Activated CD8-positive, alpha-beta T cell treated with anti-CD3 and anti-CD28 coated beads for 36 hours (primary cell): ENCODE measurements at regions of chr4 and their contacts with region 1.

Region 1: DNA sequence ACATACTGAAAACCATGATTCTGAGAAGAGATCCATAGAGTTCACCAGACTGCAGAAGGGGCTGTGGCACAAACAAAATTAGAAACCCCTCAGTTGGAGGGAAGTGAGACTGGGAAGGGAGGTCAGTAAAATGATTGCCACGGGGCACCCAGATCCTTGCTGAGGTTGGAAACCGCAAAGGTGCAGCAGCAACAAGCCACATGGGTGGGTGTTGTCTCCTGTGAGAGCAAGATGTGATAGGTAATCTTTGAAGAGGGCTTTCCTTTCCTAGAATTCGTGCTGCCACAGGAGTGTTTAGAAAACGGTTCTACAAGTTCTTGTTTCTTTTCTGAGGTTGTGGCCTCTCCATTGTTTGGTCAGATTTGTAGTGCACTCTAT is 85.5 kb downstream of the NFKB1 start:
- DNase-seq: peak; percentile 83
- ATAC-seq: peak; percentile 62
- H3K4me3 Mint-ChIP-seq: no peak overlapping the region
- H3K27ac Mint-ChIP-seq: peak overlapping the region; percentile 95
- H3K4me1 Mint-ChIP-seq: peaks cover 87% of the 10 kb centered on the region
- H3K27me3 Mint-ChIP-seq: no peaks in the 10 kb centered on the region
- CTCF ChIP-seq: no peak

Region 2: DNA sequence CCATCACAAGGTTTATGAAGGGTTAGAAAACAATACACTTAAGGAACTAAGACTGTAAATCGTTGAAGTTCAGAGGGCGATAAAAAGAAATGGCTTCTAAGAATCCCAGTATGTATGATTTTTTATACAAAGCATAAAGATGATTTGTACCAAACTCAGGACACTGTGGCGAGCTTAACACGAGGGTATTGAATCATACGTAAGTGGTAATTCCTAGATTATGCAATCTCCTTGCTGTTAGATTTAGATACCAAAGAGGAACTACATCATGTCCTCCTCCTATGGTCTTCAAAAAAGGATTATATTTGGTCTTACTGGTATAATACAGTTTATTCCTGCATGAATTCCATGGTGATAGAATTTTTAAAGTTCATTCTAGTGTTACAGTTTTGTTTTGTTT is 61.5 kb before region 1 on chr4:
- CTCF ChIA-PET with region 1: interaction called, 7 read pairs
- POLR2A ChIA-PET with region 1: interaction called, 4 read pairs
- intact Hi-C with region 1: loop called (anchors 5 kb)
- DNase-seq: no peak
- ATAC-seq: no peak
- H3K4me3 Mint-ChIP-seq: peak overlapping the region; percentile 17
- H3K27ac Mint-ChIP-seq: peak overlapping the region; percentile 84
- H3K4me1 Mint-ChIP-seq: peaks cover 91% of the 10 kb centered on the region
- H3K27me3 Mint-ChIP-seq: no peaks in the 10 kb centered on the region
- CTCF ChIP-seq: no peak

Region 3: DNA sequence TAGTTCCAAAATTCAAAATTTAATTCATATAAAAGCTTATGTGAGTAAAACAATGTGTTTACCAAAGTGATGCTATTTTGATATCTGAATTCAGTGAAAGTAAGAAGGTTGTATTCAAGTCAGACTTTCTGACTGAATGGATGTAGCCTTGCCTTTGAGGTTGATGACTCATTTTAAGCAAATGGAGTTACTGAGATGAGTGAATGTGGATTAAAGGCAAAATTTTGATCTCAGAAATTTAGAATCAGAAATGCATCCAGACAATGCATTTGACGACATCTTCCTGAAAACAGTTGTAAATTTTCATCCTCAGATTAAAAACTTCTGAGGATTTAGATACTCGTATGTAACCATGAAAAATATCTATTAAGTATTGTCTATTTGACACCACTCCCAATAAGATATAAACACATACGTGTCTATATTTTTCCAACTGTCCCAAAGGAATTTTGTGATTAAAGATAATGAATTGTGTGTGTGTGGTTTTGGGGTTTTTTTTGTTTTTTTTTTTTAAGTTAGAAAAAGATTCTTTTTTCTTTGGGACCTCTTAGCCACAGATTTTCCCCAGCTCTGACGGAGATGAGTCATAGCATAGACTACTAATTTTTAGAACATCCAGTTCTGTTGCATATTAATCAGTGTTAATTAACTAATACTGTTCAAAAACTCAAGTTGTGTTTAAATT is 51.1 kb before region 1 on chr4:
- CTCF ChIA-PET with region 1: interaction called, 3 read pairs
- POLR2A ChIA-PET with region 1: interaction called, 10 read pairs
- intact Hi-C with region 1: no loop called
- DNase-seq: no peak
- ATAC-seq: peak; percentile 82
- H3K4me3 Mint-ChIP-seq: peak overlapping the region; percentile 17
- H3K27ac Mint-ChIP-seq: peak overlapping the region; percentile 74
- H3K4me1 Mint-ChIP-seq: peaks cover 62% of the 10 kb centered on the region
- H3K27me3 Mint-ChIP-seq: no peaks in the 10 kb centered on the region
- CTCF ChIP-seq: no peak